Activated CD8-positive, alpha-beta T cell treated with anti-CD3 and anti-CD28 coated beads for 36 hours (primary cell): ENCODE measurements at regions of chr3 and their contacts with region 1.

Region 1: GRCh38 chr3:112582244-112582874 is 20.5 kb downstream of the SLC35A5 start:
- DNase-seq: peak; percentile 24
- ATAC-seq: peak; percentile 55
- H3K4me3 Mint-ChIP-seq: no peak overlapping the region
- H3K27ac Mint-ChIP-seq: no peak overlapping the region
- H3K4me1 Mint-ChIP-seq: peaks cover 4% of the 10 kb centered on the region
- H3K27me3 Mint-ChIP-seq: no peaks in the 10 kb centered on the region
- CTCF ChIP-seq: peak; percentile 43

Region 2: DNA sequence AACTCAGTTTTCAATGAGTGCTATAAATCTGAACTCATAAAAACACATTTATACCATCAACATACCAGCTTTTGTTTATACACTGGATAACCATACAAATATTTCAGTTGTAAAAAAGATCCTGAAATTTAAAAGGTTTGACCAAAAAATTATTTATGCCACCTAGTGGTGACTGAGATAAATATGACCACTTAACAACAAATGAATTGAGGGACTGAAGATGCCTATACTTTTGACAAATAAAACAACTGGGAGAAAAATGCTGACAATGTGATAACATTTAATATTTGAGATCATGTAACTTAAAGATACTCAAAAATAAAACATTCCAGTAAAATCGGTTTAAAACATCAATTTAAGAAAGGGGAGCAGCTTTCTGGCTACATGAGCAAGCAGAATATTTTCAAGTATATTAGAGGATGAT is 51.0 kb before region 1 on chr3:
- CTCF ChIA-PET with region 1: no interaction called
- POLR2A ChIA-PET with region 1: no interaction called
- intact Hi-C with region 1: no loop called
- DNase-seq: no peak
- ATAC-seq: peak; percentile 45
- H3K4me3 Mint-ChIP-seq: no peak overlapping the region
- H3K27ac Mint-ChIP-seq: no peak overlapping the region
- H3K4me1 Mint-ChIP-seq: peaks cover 5% of the 10 kb centered on the region
- H3K27me3 Mint-ChIP-seq: no peaks in the 10 kb centered on the region
- CTCF ChIP-seq: peak; percentile 57

Region 3: DNA sequence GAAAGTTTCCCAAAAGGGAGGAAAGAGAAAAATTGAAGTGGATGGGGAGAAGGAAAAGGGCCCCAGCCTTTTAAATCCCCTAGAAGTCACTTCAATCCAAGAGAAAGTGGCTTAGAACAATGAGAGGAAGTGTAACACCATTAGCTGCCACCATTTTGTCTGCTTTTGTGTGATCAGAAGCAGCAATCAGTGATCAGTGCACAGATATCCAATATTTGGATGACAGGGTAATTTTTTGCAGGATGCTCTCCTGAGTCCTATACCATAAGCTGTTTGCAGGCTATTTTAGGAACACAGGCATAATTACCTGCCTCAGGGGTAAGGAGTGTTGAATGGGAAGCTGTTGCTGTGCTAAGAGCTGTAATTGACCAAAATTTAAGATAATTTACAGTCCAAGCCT is 10.9 kb after region 1 on chr3:
- CTCF ChIA-PET with region 1: interaction called, 19 read pairs
- POLR2A ChIA-PET with region 1: no interaction called
- intact Hi-C with region 1: no loop called
- DNase-seq: no peak
- ATAC-seq: no peak
- H3K4me3 Mint-ChIP-seq: no peak overlapping the region
- H3K27ac Mint-ChIP-seq: no peak overlapping the region
- H3K4me1 Mint-ChIP-seq: no peaks in the 10 kb centered on the region
- H3K27me3 Mint-ChIP-seq: no peaks in the 10 kb centered on the region
- CTCF ChIP-seq: no peak

Region 4: GRCh38 chr3:112605285-112605684 is 22.9 kb after region 1 on chr3:
- CTCF ChIA-PET with region 1: interaction called, 15 read pairs
- POLR2A ChIA-PET with region 1: no interaction called
- intact Hi-C with region 1: no loop called
- DNase-seq: no peak
- ATAC-seq: peak; percentile 17
- H3K4me3 Mint-ChIP-seq: no peak overlapping the region
- H3K27ac Mint-ChIP-seq: no peak overlapping the region
- H3K4me1 Mint-ChIP-seq: peaks cover 18% of the 10 kb centered on the region
- H3K27me3 Mint-ChIP-seq: no peaks in the 10 kb centered on the region
- CTCF ChIP-seq: no peak

Region 5: DNA sequence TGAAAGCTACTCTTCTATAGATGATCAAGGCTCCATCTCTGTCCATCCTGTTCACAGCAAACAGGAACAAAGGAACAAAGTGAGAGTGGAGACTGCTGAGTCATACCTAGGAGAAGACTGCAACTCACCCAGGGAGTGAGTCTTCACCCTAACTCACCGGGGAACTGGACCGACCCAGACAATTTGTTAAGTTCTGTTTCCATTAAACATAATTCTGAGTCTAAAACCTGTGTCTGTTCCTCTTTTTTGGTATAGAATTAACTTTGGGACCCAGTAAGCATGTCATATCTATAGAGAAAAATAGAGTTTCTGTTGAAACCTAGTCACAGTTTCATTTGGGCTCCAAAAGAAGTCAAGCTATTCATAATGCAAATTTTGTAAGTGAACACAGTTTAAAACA is 36.9 kb after region 1 on chr3:
- CTCF ChIA-PET with region 1: interaction called, 11 read pairs
- POLR2A ChIA-PET with region 1: no interaction called
- intact Hi-C with region 1: no loop called
- DNase-seq: no peak
- ATAC-seq: no peak
- H3K4me3 Mint-ChIP-seq: no peak overlapping the region
- H3K27ac Mint-ChIP-seq: no peak overlapping the region
- H3K4me1 Mint-ChIP-seq: no peaks in the 10 kb centered on the region
- H3K27me3 Mint-ChIP-seq: peaks cover 8% of the 10 kb centered on the region
- CTCF ChIP-seq: no peak

Region 6: GRCh38 chr3:112635671-112636070 is 53.3 kb after region 1 on chr3:
- CTCF ChIA-PET with region 1: interaction called, 28 read pairs
- POLR2A ChIA-PET with region 1: no interaction called
- intact Hi-C with region 1: no loop called
- DNase-seq: no peak
- ATAC-seq: no peak
- H3K4me3 Mint-ChIP-seq: no peak overlapping the region
- H3K27ac Mint-ChIP-seq: no peak overlapping the region
- H3K4me1 Mint-ChIP-seq: peaks cover 8% of the 10 kb centered on the region
- H3K27me3 Mint-ChIP-seq: peaks cover 2% of the 10 kb centered on the region
- CTCF ChIP-seq: no peak

Region 7: DNA sequence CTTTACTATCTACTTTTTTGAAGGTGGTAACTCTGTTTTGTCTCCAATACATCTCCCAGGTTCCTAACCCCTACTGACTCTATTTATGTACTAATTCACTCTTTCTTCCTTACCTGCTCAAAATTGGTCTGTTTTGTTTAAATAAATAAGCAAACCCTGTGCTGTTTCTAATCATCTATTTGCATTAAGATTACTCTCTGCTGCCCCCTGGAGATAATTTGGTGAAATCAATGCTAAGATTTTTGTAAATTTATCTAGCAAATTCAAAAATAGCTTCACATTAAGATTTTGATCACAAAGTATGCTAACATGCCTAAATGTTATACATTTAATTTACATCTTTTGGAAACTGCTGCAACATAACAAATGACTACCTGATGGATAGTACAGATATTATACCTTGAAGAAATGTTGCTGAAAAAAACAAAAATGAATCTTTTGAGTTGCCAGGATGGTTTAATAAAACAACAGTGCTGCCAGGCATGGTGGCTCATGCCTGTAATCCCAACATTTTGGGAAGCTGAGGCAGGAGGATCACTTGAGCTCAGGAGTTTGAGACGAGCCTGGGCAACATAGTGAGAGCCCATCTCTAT is 397.0 kb after region 1 on chr3:
- CTCF ChIA-PET with region 1: interaction called, 14 read pairs
- POLR2A ChIA-PET with region 1: no interaction called
- intact Hi-C with region 1: no loop called
- DNase-seq: no peak
- ATAC-seq: peak; percentile 38
- H3K4me3 Mint-ChIP-seq: no peak overlapping the region
- H3K27ac Mint-ChIP-seq: no peak overlapping the region
- H3K4me1 Mint-ChIP-seq: peaks cover 60% of the 10 kb centered on the region
- H3K27me3 Mint-ChIP-seq: no peaks in the 10 kb centered on the region
- CTCF ChIP-seq: peak; percentile 88